CD8-positive, alpha-beta memory T cell (primary cell): ENCODE measurements at regions of chr3 and their contacts with region 1.

Region 1: GRCh38 chr3:23938688-23939087 is 6.4 kb upstream of the NR1D2 start:
- DNase-seq: no peak
- H3K4me3 ChIP-seq: no peak overlapping the region
- H3K4me3 Mint-ChIP-seq: no peak overlapping the region
- H3K27ac ChIP-seq: no peak overlapping the region
- H3K27ac Mint-ChIP-seq: no peak overlapping the region
- H3K4me1 ChIP-seq: no peaks in the 10 kb centered on the region
- H3K4me1 Mint-ChIP-seq: peaks cover 2 to 3% (median 2%) of the 10 kb centered on the region in 3 donors
- H3K27me3 ChIP-seq: no peaks in the 10 kb centered on the region
- H3K27me3 Mint-ChIP-seq: peaks cover 5 to 8% of the 10 kb centered on the region in 2 donors

Region 2: DNA sequence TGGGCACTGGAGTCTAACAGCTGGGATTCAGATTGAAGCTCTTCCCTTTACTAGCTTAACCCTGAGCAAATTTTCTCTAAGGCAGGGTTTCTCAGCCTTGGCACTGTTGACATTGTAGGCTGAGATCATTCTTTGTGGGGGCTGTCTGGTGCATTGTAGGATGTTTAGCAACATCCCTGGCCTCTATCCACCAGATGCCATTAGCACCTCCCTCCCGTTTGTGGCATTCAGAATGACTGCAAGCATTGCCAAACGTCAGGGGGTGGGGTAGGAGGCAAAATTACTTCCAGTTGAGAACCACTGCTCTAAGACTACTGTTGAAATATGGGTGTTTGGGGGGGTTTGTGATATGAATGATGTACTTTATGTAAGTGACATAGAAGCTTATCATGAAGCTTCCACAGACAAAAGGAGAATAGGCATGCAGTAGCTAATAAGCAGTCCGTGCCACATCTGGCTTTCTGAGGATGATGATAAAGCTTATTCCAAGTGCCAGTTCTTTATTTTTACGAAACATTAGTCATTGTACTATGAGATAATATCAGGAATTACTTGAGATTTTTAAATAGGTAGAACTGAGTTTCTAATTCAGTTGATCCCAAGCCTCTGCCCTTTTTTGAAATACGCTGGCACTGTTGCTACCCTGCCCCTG is 61.2 kb before region 1 on chr3:
- CTCF ChIA-PET with region 1: no interaction called
- POLR2A ChIA-PET with region 1: no interaction called
- DNase-seq: no peak
- H3K4me3 ChIP-seq: no peak overlapping the region
- H3K4me3 Mint-ChIP-seq: no peak overlapping the region
- H3K27ac ChIP-seq: no peak overlapping the region
- H3K27ac Mint-ChIP-seq: peak overlapping the region in 3 of 8 donors; percentile 1 to 66 (median 26)
- H3K4me1 ChIP-seq: peaks cover 8% of the 10 kb centered on the region
- H3K4me1 Mint-ChIP-seq: peaks cover 37 to 66% (median 42%) of the 10 kb centered on the region in 3 donors
- H3K27me3 ChIP-seq: no peaks in the 10 kb centered on the region
- H3K27me3 Mint-ChIP-seq: peaks cover 0 to 1% of the 10 kb centered on the region in 2 donors

Region 3: DNA sequence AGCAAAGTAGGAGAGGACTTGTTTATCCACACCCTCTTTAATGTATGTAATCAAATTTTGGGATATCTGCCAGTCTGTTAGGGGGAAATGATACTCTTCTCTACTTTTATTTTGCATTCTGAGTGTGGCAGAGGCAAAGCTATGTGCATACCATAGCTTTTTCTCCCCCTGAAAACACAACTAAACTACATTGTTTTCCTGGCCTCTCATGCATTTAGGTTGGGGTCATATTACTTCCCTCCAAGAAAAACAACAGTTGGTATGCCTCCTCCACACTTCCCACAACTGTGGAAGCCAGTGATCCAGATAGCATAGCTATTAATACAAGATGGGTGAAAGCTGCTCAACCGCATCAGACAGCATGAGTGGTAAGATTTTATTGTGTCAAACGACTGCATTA is 14.9 kb before region 1 on chr3:
- CTCF ChIA-PET with region 1: interaction called, 5 read pairs
- POLR2A ChIA-PET with region 1: interaction called, 32 read pairs
- DNase-seq: no peak
- H3K4me3 ChIP-seq: no peak overlapping the region
- H3K4me3 Mint-ChIP-seq: no peak overlapping the region
- H3K27ac ChIP-seq: no peak overlapping the region
- H3K27ac Mint-ChIP-seq: peak overlapping the region in 2 of 8 donors; percentile 54 to 70
- H3K4me1 ChIP-seq: peaks cover 4% of the 10 kb centered on the region
- H3K4me1 Mint-ChIP-seq: peaks cover 15 to 21% (median 20%) of the 10 kb centered on the region in 3 donors
- H3K27me3 ChIP-seq: no peaks in the 10 kb centered on the region
- H3K27me3 Mint-ChIP-seq: peaks cover 0 to 2% of the 10 kb centered on the region in 2 donors

Region 4: GRCh38 chr3:24017305-24017704 is 78.6 kb after region 1 on chr3:
- CTCF ChIA-PET with region 1: no interaction called
- POLR2A ChIA-PET with region 1: no interaction called
- DNase-seq: no peak
- H3K4me3 ChIP-seq: no peak overlapping the region
- H3K4me3 Mint-ChIP-seq: no peak overlapping the region
- H3K27ac ChIP-seq: no peak overlapping the region
- H3K27ac Mint-ChIP-seq: no peak overlapping the region
- H3K4me1 ChIP-seq: no peaks in the 10 kb centered on the region
- H3K4me1 Mint-ChIP-seq: no peaks in the 10 kb centered on the region
- H3K27me3 ChIP-seq: no peaks in the 10 kb centered on the region
- H3K27me3 Mint-ChIP-seq: peaks cover 1 to 3% of the 10 kb centered on the region in 2 donors